ENCODE measurements at regions of chr2 and their contacts with region 1.

Region 1: DNA sequence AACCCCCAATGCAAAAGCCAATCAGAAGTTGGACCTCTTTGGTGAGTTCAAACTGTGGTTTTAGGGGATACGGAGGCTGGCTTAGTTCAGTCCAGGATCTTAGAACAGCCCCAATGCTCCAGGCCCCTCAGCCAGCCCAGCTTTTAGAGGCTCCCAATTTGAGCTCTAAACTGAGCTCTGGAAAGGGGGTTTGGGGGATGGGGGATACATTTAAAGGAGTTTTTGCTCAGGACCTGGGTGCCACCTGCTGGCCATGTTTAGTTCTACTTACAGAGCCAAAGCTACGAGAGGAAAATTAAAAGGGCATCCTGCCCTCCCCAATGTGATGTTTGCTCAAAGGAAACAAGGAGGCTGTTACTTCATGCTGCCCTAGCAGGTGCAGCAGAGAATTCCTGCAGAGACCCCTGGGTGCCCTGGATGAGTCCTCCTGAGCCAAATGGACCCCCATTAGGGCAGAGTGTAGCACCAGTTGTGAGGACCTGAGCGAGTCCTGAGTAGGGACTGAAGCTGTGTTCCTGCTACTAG is 15.9 kb upstream of the TMEM214 start:
- DNase-seq: peak; percentile 68
- H3K4me3 ChIP-seq: no peak overlapping the region
- H3K27ac ChIP-seq: no peak overlapping the region
- H3K4me1 ChIP-seq: peaks cover 12% of the 10 kb centered on the region
- H3K27me3 ChIP-seq: no peaks in the 10 kb centered on the region
- CTCF ChIP-seq: peak; percentile 57

Region 2: GRCh38 chr2:26900831-26901321 is 116.0 kb before region 1 on chr2:
- intact Hi-C with region 1: no loop called
- DNase-seq: no peak
- H3K4me3 ChIP-seq: no peak overlapping the region
- H3K27ac ChIP-seq: no peak overlapping the region
- H3K4me1 ChIP-seq: no peaks in the 10 kb centered on the region
- H3K27me3 ChIP-seq: no peaks in the 10 kb centered on the region
- CTCF ChIP-seq: no peak

Region 3: GRCh38 chr2:26959331-26959730 is 57.5 kb before region 1 on chr2:
- intact Hi-C with region 1: loop called (anchors 2 kb)
- DNase-seq: no peak
- H3K4me3 ChIP-seq: no peak overlapping the region
- H3K27ac ChIP-seq: no peak overlapping the region
- H3K4me1 ChIP-seq: no peaks in the 10 kb centered on the region
- H3K27me3 ChIP-seq: no peaks in the 10 kb centered on the region
- CTCF ChIP-seq: no peak